Aorta (tissue), 5 donors: ENCODE measurements at regions of chr1 and their contacts with region 1.

Region 1: DNA sequence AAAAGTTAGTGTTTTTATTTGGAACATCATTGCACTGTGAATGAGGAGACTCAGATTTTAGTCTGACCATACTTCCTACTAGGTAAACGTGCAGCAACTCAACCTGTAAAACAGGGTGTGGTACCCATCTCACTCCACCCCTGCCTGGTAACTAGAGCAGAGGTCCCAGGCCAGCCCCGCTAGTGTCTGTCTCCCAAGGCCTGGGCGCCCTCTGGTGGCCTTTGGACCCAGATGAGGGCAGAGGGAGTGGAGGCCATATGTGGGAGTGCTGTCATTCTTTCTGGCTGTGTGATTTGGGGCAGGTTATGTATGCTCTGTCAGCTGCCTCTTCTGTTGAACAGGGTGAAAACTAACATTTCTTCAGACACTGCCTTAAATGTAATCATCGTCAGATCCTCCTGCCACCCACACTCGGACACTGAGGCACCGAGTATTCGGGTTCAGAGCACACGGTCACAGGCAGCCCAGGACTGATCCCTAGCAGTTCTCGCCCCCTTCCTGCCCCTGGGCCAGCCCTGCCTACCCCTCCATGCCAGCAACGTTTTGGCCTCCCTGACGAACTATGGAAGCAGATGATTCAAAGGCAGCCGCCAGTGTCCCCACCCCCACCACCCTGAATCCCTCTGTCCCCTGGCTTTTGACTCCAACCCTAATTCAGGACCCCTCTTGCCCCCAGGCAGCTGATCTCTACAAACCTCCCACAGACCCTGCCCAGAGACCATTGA is 76.0 kb downstream of the CD247 start:
- DNase-seq: peak; percentile 89 to 94
- ATAC-seq: peak; percentile 84
- H3K4me3 ChIP-seq: no peak overlapping the region
- H3K27ac ChIP-seq: no peak overlapping the region
- H3K4me1 ChIP-seq: no peaks in the 10 kb centered on the region
- H3K27me3 ChIP-seq: no peaks in the 10 kb centered on the region

Region 2: GRCh38 chr1:167263819-167264464 is 178.3 kb before region 1 on chr1:
- intact Hi-C with region 1: loop called (anchors 2 to 5 kb)
- DNase-seq: no peak
- ATAC-seq: no peak
- H3K4me3 ChIP-seq: no peak overlapping the region
- H3K27ac ChIP-seq: no peak overlapping the region
- H3K4me1 ChIP-seq: peaks cover 3 to 5% of the 10 kb centered on the region in 2 donors
- H3K27me3 ChIP-seq: no peaks in the 10 kb centered on the region

Region 3: GRCh38 chr1:167629681-167630567 is 187.6 kb after region 1 on chr1 and contains the start of gene RCSD1:
- intact Hi-C with region 1: no loop called
- DNase-seq: peak; percentile 64 to 81
- ATAC-seq: peak; percentile 73
- H3K4me3 ChIP-seq: peak within 1 kb of the TSS; percentile 42 to 65
- H3K27ac ChIP-seq: no peak within 1 kb of the TSS
- H3K4me1 ChIP-seq: no peaks in the 10 kb centered on the region
- H3K27me3 ChIP-seq: no peaks in the 10 kb centered on the region
- total RNA-seq, gene RCSD1: 11.2 to 17.9 TPM